ENCODE measurements at regions of chr7 and their contacts with region 1.

Region 1: DNA sequence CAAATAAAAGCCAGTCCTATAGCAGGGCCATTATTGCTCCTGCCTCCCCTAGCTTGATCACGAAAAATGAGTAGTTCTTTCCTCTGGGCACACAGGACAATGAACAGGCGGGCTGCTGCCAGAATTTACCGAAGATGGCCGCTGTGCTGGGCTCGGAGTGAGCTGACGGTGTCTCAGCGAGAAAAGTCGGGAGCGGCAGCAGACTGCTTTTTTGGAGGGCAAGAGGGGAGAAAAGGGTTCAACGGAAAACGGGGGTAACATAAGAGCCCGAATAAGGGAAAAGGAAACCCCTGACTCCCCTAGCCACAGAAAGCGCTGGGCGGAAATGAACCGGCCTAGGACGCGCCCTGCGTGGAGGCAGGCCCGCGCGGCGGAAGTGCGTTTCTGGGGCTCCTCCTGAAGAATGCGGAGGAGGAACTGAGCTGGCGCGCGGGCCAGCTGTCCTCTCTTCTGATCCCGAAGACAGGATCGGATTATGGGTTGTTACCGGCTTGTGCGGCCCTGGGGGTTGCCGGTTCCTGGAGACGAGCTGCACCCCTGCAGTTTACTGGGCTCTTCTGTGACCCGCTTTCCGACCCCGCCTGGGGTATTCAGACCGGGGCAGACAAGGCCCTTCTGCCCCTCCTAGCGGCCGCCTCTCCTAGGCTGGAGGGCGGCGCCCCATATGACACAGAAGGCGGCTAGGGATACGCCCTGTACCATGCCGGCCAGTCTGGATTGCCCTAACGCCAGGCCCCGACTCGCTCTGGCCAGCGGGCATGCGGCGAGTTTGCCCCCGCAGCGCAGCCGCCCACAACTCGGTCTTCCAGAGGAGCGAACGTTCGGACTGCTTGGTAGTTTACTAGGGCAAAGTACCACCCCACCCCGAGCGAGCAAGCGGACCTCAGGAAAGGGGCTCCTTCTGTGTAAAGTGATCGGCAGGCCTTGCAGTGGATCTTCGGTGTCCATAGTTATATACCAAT is 30.1 kb upstream of the KMT2E start:
- DNase-seq: peak; percentile 78 to 86 (median 84)
- ATAC-seq: peak; percentile 94
- H3K4me3 ChIP-seq: peak overlapping the region; percentile 93
- H3K4me3 Mint-ChIP-seq: peak overlapping the region; percentile 93 to 100 (median 99)
- H3K27ac ChIP-seq: peak overlapping the region; percentile 98
- H3K27ac Mint-ChIP-seq: peak overlapping the region; percentile 98 to 100 (median 100)
- H3K4me1 ChIP-seq: peaks cover 19 to 23% of the 10 kb centered on the region in 2 donors
- H3K4me1 Mint-ChIP-seq: peaks cover 27 to 67% (median 55%) of the 10 kb centered on the region in 7 donors
- H3K27me3 ChIP-seq: no peaks in the 10 kb centered on the region
- H3K27me3 Mint-ChIP-seq: no peaks in the 10 kb centered on the region

Region 2: GRCh38 chr7:104943502-104944343 is 40.1 kb before region 1 on chr7:
- CTCF ChIA-PET with region 1: interaction called, 6 read pairs
- POLR2A ChIA-PET with region 1: interaction called, 19 read pairs
- intact Hi-C with region 1: loop called (anchors 1 kb)
- DNase-seq: peak; percentile 31 to 85 (median 68)
- ATAC-seq: peak; percentile 23
- H3K4me3 ChIP-seq: peak overlapping the region; percentile 40
- H3K4me3 Mint-ChIP-seq: peak overlapping the region; percentile 77 to 95 (median 88)
- H3K27ac ChIP-seq: peak overlapping the region; percentile 87
- H3K27ac Mint-ChIP-seq: peak overlapping the region; percentile 95 to 100 (median 100)
- H3K4me1 ChIP-seq: peaks cover 46 to 50% of the 10 kb centered on the region in 2 donors
- H3K4me1 Mint-ChIP-seq: peaks cover 45 to 79% (median 70%) of the 10 kb centered on the region in 7 donors
- H3K27me3 ChIP-seq: no peaks in the 10 kb centered on the region
- H3K27me3 Mint-ChIP-seq: peaks cover 0 to 2% (median 0%) of the 10 kb centered on the region in 5 donors

Region 3: DNA sequence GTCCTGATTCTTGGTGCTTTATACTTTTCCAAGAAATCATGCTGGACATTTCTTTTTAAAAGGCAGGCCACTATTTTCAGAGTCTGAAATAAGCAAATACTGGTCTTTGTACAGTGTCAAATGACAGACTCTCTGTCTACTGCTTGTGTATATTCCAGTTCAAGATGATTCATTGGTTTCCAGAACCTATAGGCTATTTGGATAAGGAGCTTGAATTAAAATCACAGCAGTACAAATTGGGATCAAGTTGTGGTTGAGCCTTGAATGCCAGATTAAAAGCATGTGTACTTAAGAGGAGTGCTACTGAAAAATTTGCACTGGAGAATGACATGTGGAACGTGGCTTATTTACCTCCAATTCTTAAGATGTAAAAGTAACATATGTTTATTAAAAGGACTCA is 40.9 kb after region 1 on chr7:
- CTCF ChIA-PET with region 1: interaction called, 10 read pairs
- POLR2A ChIA-PET with region 1: interaction called, 639 read pairs
- intact Hi-C with region 1: no loop called
- DNase-seq: no peak
- ATAC-seq: no peak
- H3K4me3 ChIP-seq: no peak overlapping the region
- H3K4me3 Mint-ChIP-seq: peak overlapping the region in 8 of 10 donors; percentile 29 to 96 (median 58)
- H3K27ac ChIP-seq: no peak overlapping the region
- H3K27ac Mint-ChIP-seq: peak overlapping the region in 2 of 9 donors; percentile 28 to 50
- H3K4me1 ChIP-seq: peaks cover 67 to 74% of the 10 kb centered on the region in 2 donors
- H3K4me1 Mint-ChIP-seq: peaks cover 63 to 99% (median 92%) of the 10 kb centered on the region in 7 donors
- H3K27me3 ChIP-seq: no peaks in the 10 kb centered on the region
- H3K27me3 Mint-ChIP-seq: no peaks in the 10 kb centered on the region

Region 4: DNA sequence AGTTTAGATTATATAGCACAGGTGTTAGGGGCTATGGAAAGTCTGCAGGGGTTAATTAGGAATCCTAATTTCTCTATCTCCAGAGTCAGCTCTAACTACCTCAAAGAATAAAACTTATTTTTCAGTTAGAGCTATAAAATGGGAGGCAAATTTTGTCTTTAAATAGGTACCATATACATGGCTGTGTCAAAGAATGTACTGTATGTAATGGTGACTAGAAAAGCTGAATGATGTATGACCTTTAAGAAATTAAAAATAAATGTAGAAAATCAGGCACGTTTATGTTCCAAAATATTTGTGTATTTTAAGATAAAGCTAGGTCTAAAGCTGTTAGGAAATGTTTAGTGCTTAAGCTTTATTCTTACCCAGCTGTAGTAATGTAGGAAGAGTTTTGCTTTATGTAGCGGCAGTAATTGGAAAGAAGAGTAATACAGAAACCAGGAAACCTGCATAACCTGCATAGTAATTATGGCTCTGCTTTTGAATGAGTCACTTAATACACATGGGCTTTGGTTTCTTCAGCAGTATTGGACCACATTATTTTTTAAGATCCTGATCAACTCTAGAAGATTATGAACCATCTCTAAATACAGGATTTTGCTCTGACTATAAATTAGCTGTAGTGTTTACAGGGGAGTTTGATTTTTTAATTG is 115.1 kb after region 1 on chr7:
- CTCF ChIA-PET with region 1: interaction called, 3 read pairs
- POLR2A ChIA-PET with region 1: no interaction called
- intact Hi-C with region 1: loop called in 1 of 2 experiments (anchors 5 kb)
- DNase-seq: no peak
- ATAC-seq: no peak
- H3K4me3 ChIP-seq: no peak overlapping the region
- H3K4me3 Mint-ChIP-seq: peak overlapping the region in 1 of 10 donors; percentile 7
- H3K27ac ChIP-seq: no peak overlapping the region
- H3K27ac Mint-ChIP-seq: peak overlapping the region in 8 of 9 donors; percentile 37 to 87 (median 73)
- H3K4me1 ChIP-seq: peaks cover 0 to 3% of the 10 kb centered on the region in 2 donors
- H3K4me1 Mint-ChIP-seq: peaks cover 5 to 56% (median 39%) of the 10 kb centered on the region in 7 donors
- H3K27me3 ChIP-seq: no peaks in the 10 kb centered on the region
- H3K27me3 Mint-ChIP-seq: no peaks in the 10 kb centered on the region

Region 5: DNA sequence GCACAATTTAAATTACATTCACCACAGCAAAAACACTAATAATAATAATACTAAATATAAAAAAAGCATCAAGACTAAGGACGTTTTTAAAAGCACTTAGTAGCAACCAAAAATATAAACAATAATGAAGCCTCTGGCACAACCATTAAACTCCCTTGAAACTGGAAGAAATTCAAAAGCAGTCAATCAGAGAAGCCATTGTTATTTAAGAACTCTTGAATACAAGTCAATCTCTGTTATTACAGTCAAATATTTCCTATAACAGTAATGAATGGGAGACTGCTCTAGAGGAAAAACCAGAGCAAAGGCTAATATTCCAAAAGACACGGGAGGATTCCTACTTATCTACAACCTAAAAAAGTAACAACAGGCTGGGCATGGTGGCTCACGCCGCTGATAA is 194.3 kb after region 1 on chr7:
- CTCF ChIA-PET with region 1: no interaction called
- POLR2A ChIA-PET with region 1: no interaction called
- intact Hi-C with region 1: no loop called
- DNase-seq: no peak
- ATAC-seq: no peak
- H3K4me3 ChIP-seq: no peak overlapping the region
- H3K4me3 Mint-ChIP-seq: no peak overlapping the region
- H3K27ac ChIP-seq: no peak overlapping the region
- H3K27ac Mint-ChIP-seq: peak overlapping the region in 1 of 9 donors; percentile 32
- H3K4me1 ChIP-seq: no peaks in the 10 kb centered on the region
- H3K4me1 Mint-ChIP-seq: peaks cover 7 to 51% (median 26%) of the 10 kb centered on the region in 7 donors
- H3K27me3 ChIP-seq: no peaks in the 10 kb centered on the region
- H3K27me3 Mint-ChIP-seq: no peaks in the 10 kb centered on the region

Region 6: DNA sequence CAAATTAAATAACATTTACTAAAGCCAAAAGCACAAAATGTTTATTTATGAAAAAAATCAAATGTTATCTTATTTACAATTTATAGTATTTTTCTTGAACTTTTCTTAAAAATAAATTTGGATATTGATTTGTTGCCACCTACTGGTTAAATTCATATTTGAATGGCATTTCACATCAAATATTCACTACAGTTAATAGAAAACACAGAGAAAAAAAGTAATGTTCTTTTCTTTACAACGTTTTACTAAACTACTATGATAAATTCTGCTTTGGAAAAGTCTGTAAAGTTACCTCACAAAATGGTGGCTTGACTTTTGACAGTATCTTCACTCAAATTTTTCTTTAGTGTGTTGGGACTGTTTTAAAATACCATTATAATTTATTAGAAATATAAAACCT is 352.1 kb after region 1 on chr7:
- CTCF ChIA-PET with region 1: interaction called, 11 read pairs
- POLR2A ChIA-PET with region 1: no interaction called
- intact Hi-C with region 1: loop called (anchors 1 to 5 kb)
- DNase-seq: peak in 3 of 9 donors; percentile 17 to 31 (median 17)
- ATAC-seq: no peak
- H3K4me3 ChIP-seq: no peak overlapping the region
- H3K4me3 Mint-ChIP-seq: no peak overlapping the region
- H3K27ac ChIP-seq: no peak overlapping the region
- H3K27ac Mint-ChIP-seq: no peak overlapping the region
- H3K4me1 ChIP-seq: peaks cover 0 to 6% of the 10 kb centered on the region in 2 donors
- H3K4me1 Mint-ChIP-seq: peaks cover 10 to 45% (median 30%) of the 10 kb centered on the region in 7 donors
- H3K27me3 ChIP-seq: no peaks in the 10 kb centered on the region
- H3K27me3 Mint-ChIP-seq: no peaks in the 10 kb centered on the region

Region 7: DNA sequence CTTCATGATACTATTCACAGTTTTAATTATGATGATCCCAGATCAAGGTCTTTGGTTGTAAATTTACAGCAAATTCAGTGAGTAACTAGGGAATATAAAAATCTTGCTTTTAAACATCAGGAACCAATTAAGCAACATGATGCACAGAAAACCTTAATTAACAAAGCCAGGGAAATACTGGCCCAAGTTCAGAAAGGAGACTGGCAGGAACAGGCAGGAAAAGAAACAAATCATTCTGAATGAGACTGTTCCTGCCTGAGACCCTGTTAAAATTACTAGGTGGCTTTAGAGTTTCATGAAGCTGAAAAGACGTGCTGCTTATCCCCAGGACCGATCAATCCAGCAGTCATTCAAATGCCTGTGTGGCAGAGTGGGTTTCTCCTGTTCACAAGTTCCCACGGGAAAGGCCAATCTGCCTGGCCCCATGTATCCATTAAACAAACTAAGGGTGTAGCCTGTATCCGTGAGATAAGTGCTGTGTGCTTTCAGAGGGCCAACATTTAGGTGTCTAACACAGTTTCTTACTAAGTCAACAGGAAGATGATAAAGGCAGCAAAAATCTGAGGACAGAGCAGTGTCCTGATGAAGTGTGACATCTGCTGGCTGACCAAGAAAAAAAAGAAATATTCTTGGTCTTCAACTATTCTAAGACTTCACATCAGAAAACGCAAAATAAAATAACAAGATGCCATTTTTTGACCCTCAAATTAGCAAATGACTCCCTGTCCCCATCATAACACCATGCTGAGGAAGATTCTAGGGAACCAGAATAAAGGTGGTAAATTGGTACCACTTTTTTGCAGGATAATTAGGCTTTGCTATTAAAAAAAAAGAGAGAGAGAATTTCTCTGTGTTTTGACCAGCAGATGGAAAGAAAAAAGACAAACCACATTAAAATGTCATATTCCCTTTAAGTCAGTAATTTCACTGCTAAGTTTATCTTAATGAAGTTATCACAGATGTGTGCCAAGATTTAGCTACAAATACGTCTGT is 504.0 kb after region 1 on chr7:
- CTCF ChIA-PET with region 1: interaction called, 3 read pairs
- POLR2A ChIA-PET with region 1: no interaction called
- intact Hi-C with region 1: loop called (anchors 1 to 2 kb)
- DNase-seq: peak in 4 of 9 donors; percentile 4 to 31 (median 19)
- ATAC-seq: no peak
- H3K4me3 ChIP-seq: no peak overlapping the region
- H3K4me3 Mint-ChIP-seq: no peak overlapping the region
- H3K27ac ChIP-seq: no peak overlapping the region
- H3K27ac Mint-ChIP-seq: peak overlapping the region in 1 of 9 donors; percentile 20
- H3K4me1 ChIP-seq: no peaks in the 10 kb centered on the region
- H3K4me1 Mint-ChIP-seq: peaks cover 0 to 8% (median 0%) of the 10 kb centered on the region in 7 donors
- H3K27me3 ChIP-seq: no peaks in the 10 kb centered on the region
- H3K27me3 Mint-ChIP-seq: no peaks in the 10 kb centered on the region

Measured in naive thymus-derived CD4-positive, alpha-beta T cell (primary cell).